Left colon (tissue), 2 donors: ENCODE measurements at regions of chr7 and their contacts with region 1.

Region 1: DNA sequence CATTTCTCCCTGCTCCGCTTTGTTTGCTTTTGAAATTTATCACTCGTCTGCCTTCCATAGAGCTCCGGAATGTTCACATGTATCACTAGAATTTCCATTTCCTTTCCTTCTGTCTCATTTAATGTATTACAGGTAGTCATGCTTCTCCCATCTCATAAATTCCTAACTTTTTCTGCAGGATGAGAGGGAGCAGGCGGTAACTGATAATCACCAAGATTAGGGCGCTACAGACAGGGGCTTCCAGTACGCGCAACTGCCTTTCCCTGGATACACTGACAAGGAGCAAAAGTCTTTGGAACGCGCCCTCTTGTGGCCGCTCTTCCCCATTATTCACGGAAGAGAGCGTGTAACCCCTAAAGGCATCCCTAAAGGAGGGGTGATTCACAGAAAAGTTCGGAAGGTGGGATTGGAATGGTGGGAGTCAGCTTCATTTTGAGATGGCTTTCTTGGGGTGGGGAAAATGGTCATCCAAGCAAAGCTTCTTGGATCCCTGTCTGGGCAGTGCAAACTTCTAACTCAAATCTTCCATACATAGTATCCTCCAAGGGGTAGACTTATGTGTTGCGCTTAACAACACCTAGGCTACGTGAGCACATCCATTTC is 6.5 kb downstream of the INHBA start:
- DNase-seq: peak; percentile 46 to 83
- ATAC-seq: peak; percentile 80

Region 2: DNA sequence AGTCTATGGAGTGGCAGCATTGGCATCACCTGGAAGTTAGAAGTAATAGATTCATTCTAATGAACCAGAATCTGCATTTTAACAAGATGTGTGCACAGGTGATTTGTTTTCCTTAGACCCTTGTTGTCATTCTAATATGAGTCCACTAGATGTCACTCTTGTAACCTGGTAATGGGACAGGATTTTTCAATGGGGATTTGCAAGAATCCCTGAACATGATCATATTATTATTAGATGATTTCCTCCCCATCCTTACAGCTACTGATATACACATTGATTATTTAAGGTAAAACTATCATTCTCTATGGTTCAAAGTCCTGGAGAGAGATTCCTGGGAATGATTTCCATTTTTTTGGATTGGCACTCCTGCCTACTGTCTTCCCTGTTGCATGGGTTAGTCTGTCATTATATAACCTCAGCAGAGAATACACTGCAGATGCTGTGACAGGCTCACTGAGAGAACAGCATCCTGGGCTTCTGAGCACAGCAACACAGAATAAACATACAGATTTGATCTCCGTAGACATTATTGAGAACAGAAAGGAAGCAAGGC is 1366.7 kb before region 1 on chr7:
- intact Hi-C with region 1: loop called in 1 of 2 experiments (anchors 10 kb)
- DNase-seq: no peak
- ATAC-seq: peak; percentile 77

Region 3: GRCh38 chr7:40996233-40996677 is 700.2 kb before region 1 on chr7:
- intact Hi-C with region 1: loop called in 1 of 2 experiments (anchors 10 kb)
- DNase-seq: no peak
- ATAC-seq: no peak